ENCODE measurements at regions of chr12 and their contacts with region 1.

Region 1: GRCh38 chr12:55996715-55997534 is at the start of gene SUOX:
- DNase-seq: peak; percentile 99
- H3K4me3 ChIP-seq: peak within 1 kb of the TSS; percentile 42 to 76 (median 72)
- H3K27ac ChIP-seq: peak within 1 kb of the TSS; percentile 84 to 91 (median 89)
- H3K4me1 ChIP-seq: peaks cover 0 to 19% (median 16%) of the 10 kb centered on the region in 4 donors
- H3K27me3 ChIP-seq: no peaks in the 10 kb centered on the region
- CTCF ChIP-seq: no peak
- EP300 ChIP-seq: no peak
- POLR2A ChIP-seq: peak in 1 of 2 donors; percentile 54
- total RNA-seq, gene SUOX: 20.9 to 51.0 (median 25.4) TPM

Region 2: DNA sequence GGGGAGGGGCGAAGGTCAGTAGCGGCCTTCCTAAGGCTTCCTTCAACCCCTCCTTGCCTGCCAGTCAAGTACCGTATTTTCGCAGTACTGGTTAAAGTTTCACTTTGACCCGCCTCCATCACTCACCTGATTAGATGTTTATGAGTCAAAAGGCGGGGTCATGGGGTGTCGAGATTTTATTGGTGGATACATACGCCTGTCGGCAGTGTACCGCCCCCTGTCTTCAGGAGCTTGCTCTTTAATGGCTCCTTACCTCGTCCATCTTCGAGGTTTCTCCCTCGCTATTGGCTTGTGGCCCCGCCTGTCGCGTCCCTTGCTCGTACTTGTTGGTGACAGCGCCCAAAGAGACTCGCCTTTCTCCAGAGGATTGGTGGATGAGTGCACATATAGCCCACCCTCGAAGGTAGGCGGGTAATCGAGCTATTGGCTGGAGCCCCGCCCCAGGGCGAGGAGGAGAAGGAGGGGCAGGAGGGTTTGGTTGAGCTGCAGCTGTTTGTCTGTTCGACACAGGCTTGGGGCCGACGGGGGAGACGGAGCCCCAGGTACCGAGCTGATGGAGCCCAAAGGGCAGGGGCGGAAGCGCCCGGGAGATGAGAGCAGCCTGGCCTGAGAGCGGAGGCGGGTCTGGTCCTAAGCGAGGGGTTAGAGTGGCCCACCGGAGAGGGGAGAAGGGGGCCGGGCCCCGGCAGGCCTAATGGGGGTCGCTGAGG is 23.2 kb before region 1 on chr12 and contains the start of gene RAB5B:
- intact Hi-C with region 1: loop called (anchors 1 kb)
- DNase-seq: peak; percentile 100
- H3K4me3 ChIP-seq: peak within 1 kb of the TSS; percentile 84 to 100 (median 92)
- H3K27ac ChIP-seq: peak within 1 kb of the TSS; percentile 93 to 99 (median 96)
- H3K4me1 ChIP-seq: peaks cover 0 to 49% (median 34%) of the 10 kb centered on the region in 4 donors
- H3K27me3 ChIP-seq: no peaks in the 10 kb centered on the region
- CTCF ChIP-seq: no peak
- EP300 ChIP-seq: no peak
- POLR2A ChIP-seq: peak; percentile 97 to 98
- total RNA-seq, gene RAB5B: 92.8 to 102 (median 101) TPM

Region 3: GRCh38 chr12:56041552-56042429 is 44.9 kb after region 1 on chr12 and contains the start of gene RPS26:
- intact Hi-C with region 1: loop called (anchors 1 kb)
- DNase-seq: peak; percentile 98
- H3K4me3 ChIP-seq: peak within 1 kb of the TSS; percentile 56 to 94 (median 72)
- H3K27ac ChIP-seq: peak within 1 kb of the TSS; percentile 91 to 96 (median 94)
- H3K4me1 ChIP-seq: peaks cover 0 to 20% (median 19%) of the 10 kb centered on the region in 4 donors
- H3K27me3 ChIP-seq: no peaks in the 10 kb centered on the region
- CTCF ChIP-seq: peak in 1 of 4 experiments; percentile 40
- EP300 ChIP-seq: peak in 2 of 4 donors; percentile 32 to 52
- POLR2A ChIP-seq: peak; percentile 97
- total RNA-seq, gene RPS26: 130 to 3,746 (median 1,580) TPM

Measured in sigmoid colon (tissue), 7 donors.